ENCODE measurements at regions of chr1 and their contacts with region 1.

Region 1: GRCh38 chr1:247304031-247304430 is 27.6 kb downstream of the ZNF496 start:
- DNase-seq: no peak
- H3K4me3 ChIP-seq: no peak overlapping the region
- H3K27ac ChIP-seq: no peak overlapping the region
- H3K4me1 ChIP-seq: peaks cover 3 to 6% (median 5%) of the 10 kb centered on the region in 4 experiments; a peak in 6 of 7 replicates
- H3K27me3 ChIP-seq: no peaks in the 10 kb centered on the region
- CTCF ChIP-seq: no peak
- EP300 ChIP-seq: no peak
- POLR2A ChIP-seq: no peak
- RAD21 ChIP-seq: no peak

Region 2: GRCh38 chr1:247322849-247323586 is 19.0 kb after region 1 on chr1:
- CTCF ChIA-PET with region 1: interaction called, 5 read pairs
- POLR2A ChIA-PET with region 1: interaction called, 31 read pairs
- DNase-seq: no peak
- H3K4me3 ChIP-seq: no peak overlapping the region
- H3K27ac ChIP-seq: no peak overlapping the region
- H3K4me1 ChIP-seq: peaks cover 0 to 6% (median 1%) of the 10 kb centered on the region in 4 experiments; a peak in 1 of 7 replicates
- H3K27me3 ChIP-seq: no peaks in the 10 kb centered on the region
- CTCF ChIP-seq: no peak
- EP300 ChIP-seq: no peak
- POLR2A ChIP-seq: no peak
- RAD21 ChIP-seq: no peak

Region 3: GRCh38 chr1:247343801-247344200 is 39.8 kb after region 1 on chr1:
- CTCF ChIA-PET with region 1: no interaction called
- POLR2A ChIA-PET with region 1: no interaction called
- DNase-seq: no peak
- H3K4me3 ChIP-seq: no peak overlapping the region
- H3K27ac ChIP-seq: no peak overlapping the region
- H3K4me1 ChIP-seq: no peaks in the 10 kb centered on the region; a peak in 1 of 7 replicates
- H3K27me3 ChIP-seq: no peaks in the 10 kb centered on the region
- CTCF ChIP-seq: peak in 1 of 3 experiments; percentile 27; a peak in 1 of 4 replicates
- EP300 ChIP-seq: no peak
- POLR2A ChIP-seq: no peak
- RAD21 ChIP-seq: no peak

Region 4: DNA sequence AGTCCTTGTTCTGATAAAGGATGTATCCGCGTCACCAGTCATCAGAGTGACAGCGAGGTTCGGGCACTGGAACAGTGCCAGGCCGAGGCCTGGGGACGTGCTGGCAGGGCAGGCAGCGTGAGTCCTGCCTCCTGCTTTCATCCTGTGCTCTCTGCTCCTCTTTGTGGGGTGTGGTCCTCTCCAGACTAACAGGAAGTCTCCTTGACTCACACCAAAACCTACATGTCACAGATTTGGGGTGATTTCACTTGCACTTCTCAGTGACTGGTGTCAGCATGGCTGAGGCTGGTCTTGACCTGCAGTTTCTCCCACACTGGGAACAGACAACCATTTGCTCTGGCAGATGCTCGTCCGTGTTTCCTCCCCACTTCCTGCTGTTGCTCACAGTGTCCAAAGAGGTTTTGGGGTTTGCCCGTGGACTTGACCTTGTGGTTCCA is 103.2 kb after region 1 on chr1:
- CTCF ChIA-PET with region 1: no interaction called
- POLR2A ChIA-PET with region 1: no interaction called
- DNase-seq: no peak
- H3K4me3 ChIP-seq: no peak overlapping the region
- H3K27ac ChIP-seq: no peak overlapping the region
- H3K4me1 ChIP-seq: no peaks in the 10 kb centered on the region
- H3K27me3 ChIP-seq: no peaks in the 10 kb centered on the region
- CTCF ChIP-seq: no peak
- EP300 ChIP-seq: no peak
- POLR2A ChIP-seq: no peak
- RAD21 ChIP-seq: no peak

Measured in H1 (cell line).